MCF 10A (cell line): ENCODE measurements at regions of chr10 and their contacts with region 1.

Region 1: GRCh38 chr10:49512121-49512809 is 26.7 kb downstream of the ERCC6 start:
- DNase-seq: peak; percentile 43
- H3K4me3 Mint-ChIP-seq: no peak overlapping the region
- H3K27ac Mint-ChIP-seq: peak overlapping the region; percentile 49
- H3K4me1 Mint-ChIP-seq: peaks cover 6% of the 10 kb centered on the region
- H3K27me3 Mint-ChIP-seq: no peaks in the 10 kb centered on the region
- CTCF ChIP-seq: peak; percentile 60

Region 2: GRCh38 chr10:48981310-48981907 is 530.9 kb before region 1 on chr10:
- CTCF ChIA-PET with region 1: interaction called, 3 read pairs
- POLR2A ChIA-PET with region 1: no interaction called
- intact Hi-C with region 1: loop called (anchors 2 kb)
- DNase-seq: peak; percentile 63
- H3K4me3 Mint-ChIP-seq: no peak overlapping the region
- H3K27ac Mint-ChIP-seq: no peak overlapping the region
- H3K4me1 Mint-ChIP-seq: no peaks in the 10 kb centered on the region
- H3K27me3 Mint-ChIP-seq: no peaks in the 10 kb centered on the region
- CTCF ChIP-seq: peak; percentile 73

Region 3: GRCh38 chr10:49500418-49500817 is 11.8 kb before region 1 on chr10:
- CTCF ChIA-PET with region 1: interaction called, 20 read pairs
- POLR2A ChIA-PET with region 1: interaction called, 4 read pairs
- intact Hi-C with region 1: no loop called
- DNase-seq: peak; percentile 26
- H3K4me3 Mint-ChIP-seq: no peak overlapping the region
- H3K27ac Mint-ChIP-seq: no peak overlapping the region
- H3K4me1 Mint-ChIP-seq: peaks cover 8% of the 10 kb centered on the region
- H3K27me3 Mint-ChIP-seq: no peaks in the 10 kb centered on the region
- CTCF ChIP-seq: no peak

Region 4: GRCh38 chr10:49526619-49527018 is 14.4 kb after region 1 on chr10:
- CTCF ChIA-PET with region 1: interaction called, 14 read pairs
- POLR2A ChIA-PET with region 1: interaction called, 3 read pairs
- intact Hi-C with region 1: no loop called
- DNase-seq: no peak
- H3K4me3 Mint-ChIP-seq: no peak overlapping the region
- H3K27ac Mint-ChIP-seq: peak overlapping the region; percentile 33
- H3K4me1 Mint-ChIP-seq: peaks cover 22% of the 10 kb centered on the region
- H3K27me3 Mint-ChIP-seq: no peaks in the 10 kb centered on the region
- CTCF ChIP-seq: no peak